Mammary epithelial cell (primary cell): ENCODE measurements at regions of chr2 and their contacts with region 1.

Region 1: GRCh38 chr2:24421668-24422067 is 61.3 kb upstream of the ITSN2 start:
- DNase-seq: peak; percentile 33
- H3K4me3 ChIP-seq: no peak overlapping the region
- H3K27ac ChIP-seq: no peak overlapping the region
- H3K4me1 ChIP-seq: no peaks in the 10 kb centered on the region
- H3K27me3 ChIP-seq: peaks cover 2% of the 10 kb centered on the region
- CTCF ChIP-seq: peak; percentile 35 to 69

Region 2: GRCh38 chr2:24613154-24613814 is 191.6 kb after region 1 on chr2:
- CTCF ChIA-PET with region 1: no interaction called
- dilution Hi-C with region 1: no loop called
- in situ Hi-C with region 1: no loop called
- intact Hi-C with region 1: loop called (anchors 5 kb)
- DNase-seq: peak; percentile 32
- H3K4me3 ChIP-seq: no peak overlapping the region
- H3K27ac ChIP-seq: no peak overlapping the region
- H3K4me1 ChIP-seq: no peaks in the 10 kb centered on the region
- H3K27me3 ChIP-seq: no peaks in the 10 kb centered on the region
- CTCF ChIP-seq: peak; percentile 28 to 57

Region 3: GRCh38 chr2:24792874-24793760 is 371.4 kb after region 1 on chr2 and contains the starts of genes CENPO and PTRHD1:
- CTCF ChIA-PET with region 1: no interaction called
- dilution Hi-C with region 1: no loop called
- in situ Hi-C with region 1: no loop called
- intact Hi-C with region 1: loop called (anchors 1 kb)
- DNase-seq: peak; percentile 95
- H3K4me3 ChIP-seq: peak within 1 kb of the TSS; percentile 64 to 78 (median 71)
- H3K27ac ChIP-seq: peak within 1 kb of the TSS; percentile 88
- H3K4me1 ChIP-seq: peaks cover 24% of the 10 kb centered on the region
- H3K27me3 ChIP-seq: no peaks in the 10 kb centered on the region
- CTCF ChIP-seq: peak; percentile 55 to 79
- total RNA-seq, gene CENPO: 7.2 to 27.7 TPM
- total RNA-seq, gene PTRHD1: 14.8 to 28.3 TPM